K562 (cell line): ENCODE measurements at regions of chr22 and their contacts with region 1.

Region 1: DNA sequence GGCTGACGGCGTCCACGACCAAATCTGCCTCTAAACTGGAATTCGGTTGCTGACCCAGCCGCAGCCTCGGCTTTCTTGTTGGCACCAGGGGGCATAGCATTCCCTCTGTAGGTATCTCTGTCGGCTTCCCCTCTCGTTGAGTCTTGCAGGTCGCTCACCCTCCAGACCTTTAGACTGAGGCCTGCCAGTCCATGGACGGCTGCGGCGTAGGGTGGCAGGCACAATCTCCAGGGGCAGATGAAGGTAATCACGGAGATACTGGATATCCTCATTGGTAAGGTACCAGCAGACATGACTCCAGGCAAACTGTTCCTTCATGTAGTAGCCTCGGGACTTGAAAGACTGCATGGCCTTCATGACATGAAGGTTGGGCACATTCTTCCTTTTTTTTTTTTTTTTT is 142.2 kb downstream of the BCR start:
- DNase-seq: no peak
- ATAC-seq: no peak
- H3K4me3 ChIP-seq: no peak overlapping the region
- H3K27ac ChIP-seq: no peak overlapping the region
- H3K4me1 ChIP-seq: no peaks in the 10 kb centered on the region
- H3K27me3 ChIP-seq: no peaks in the 10 kb centered on the region
- CTCF ChIP-seq: no peak
- EP300 ChIP-seq: no peak
- POLR2A ChIP-seq: no peak
- RAD21 ChIP-seq: no peak

Region 2: GRCh38 chr22:23395530-23396361 is 73.2 kb after region 1 on chr22:
- CTCF ChIA-PET with region 1: no interaction called
- POLR2A ChIA-PET with region 1: no interaction called
- in situ Hi-C with region 1: loop called (anchors 5 kb)
- intact Hi-C with region 1: no loop called
- DNase-seq: no peak
- ATAC-seq: no peak
- H3K4me3 ChIP-seq: no peak overlapping the region
- H3K27ac ChIP-seq: no peak overlapping the region
- H3K4me1 ChIP-seq: peaks cover 0 to 9% of the 10 kb centered on the region in 2 experiments; a peak in 1 of 5 replicates
- H3K27me3 ChIP-seq: no peaks in the 10 kb centered on the region
- CTCF ChIP-seq: no peak
- EP300 ChIP-seq: no peak
- POLR2A ChIP-seq: no peak
- RAD21 ChIP-seq: no peak

Region 3: DNA sequence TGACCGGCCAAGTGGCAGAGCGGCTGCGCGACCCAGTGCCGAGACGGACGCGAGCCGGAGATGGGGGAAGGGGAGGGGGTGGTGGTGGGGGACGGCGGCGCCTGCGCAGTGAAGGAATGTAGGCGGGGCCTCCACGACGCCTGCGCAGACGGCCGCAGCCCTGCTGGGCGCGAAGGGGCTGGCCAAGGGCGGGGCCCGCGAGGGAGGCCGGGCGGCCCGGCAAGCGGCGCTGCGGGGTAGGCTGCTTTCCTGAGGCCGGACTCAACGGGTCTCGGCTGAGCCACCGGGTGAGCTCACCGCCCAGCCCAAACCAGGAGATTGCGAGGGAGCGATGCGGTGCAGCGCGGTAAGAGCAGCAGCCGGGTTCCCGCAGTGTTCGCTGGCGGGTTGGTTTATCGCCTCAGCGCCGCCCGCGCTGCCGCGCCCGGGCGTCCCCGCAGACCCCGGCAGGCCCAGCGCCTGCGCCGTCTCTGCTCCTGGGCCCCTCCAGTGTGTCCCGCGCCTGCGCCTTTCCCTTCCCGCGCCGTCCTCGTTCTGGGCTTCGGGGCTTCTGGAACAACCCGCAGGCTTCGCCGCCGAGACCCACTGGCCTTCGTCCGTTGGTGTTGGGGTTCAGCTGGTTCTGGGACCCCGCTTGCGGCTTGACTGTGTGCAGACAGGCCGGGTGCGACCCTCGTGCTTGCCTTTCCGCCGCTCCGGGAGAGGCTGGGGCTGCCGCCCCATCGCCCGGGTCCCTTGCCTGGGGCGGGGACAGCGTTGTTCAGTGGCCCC is 948.3 kb after region 1 on chr22 and contains the start of gene SPECC1L:
- CTCF ChIA-PET with region 1: no interaction called
- POLR2A ChIA-PET with region 1: no interaction called
- in situ Hi-C with region 1: loop called (anchors 5 kb)
- intact Hi-C with region 1: no loop called
- DNase-seq: peak; percentile 90 to 94 (median 92)
- ATAC-seq: peak; percentile 96
- H3K4me3 ChIP-seq: peak within 1 kb of the TSS; percentile 92
- H3K27ac ChIP-seq: peak within 1 kb of the TSS; percentile 98
- H3K4me1 ChIP-seq: peaks cover 0 to 17% of the 10 kb centered on the region in 2 experiments; a peak in 2 of 5 replicates
- H3K27me3 ChIP-seq: no peaks in the 10 kb centered on the region
- CTCF ChIP-seq: peak in 2 of 3 experiments; percentile 16 to 34; a peak in 2 of 6 replicates
- EP300 ChIP-seq: no peak
- POLR2A ChIP-seq: peak; percentile 92
- RAD21 ChIP-seq: no peak
- polyA plus RNA-seq, gene SPECC1L: 1.4 to 2.6 TPM